Gastrocnemius medialis (tissue), 4 donors: ENCODE measurements at regions of chr11 and their contacts with region 1.

Region 1: DNA sequence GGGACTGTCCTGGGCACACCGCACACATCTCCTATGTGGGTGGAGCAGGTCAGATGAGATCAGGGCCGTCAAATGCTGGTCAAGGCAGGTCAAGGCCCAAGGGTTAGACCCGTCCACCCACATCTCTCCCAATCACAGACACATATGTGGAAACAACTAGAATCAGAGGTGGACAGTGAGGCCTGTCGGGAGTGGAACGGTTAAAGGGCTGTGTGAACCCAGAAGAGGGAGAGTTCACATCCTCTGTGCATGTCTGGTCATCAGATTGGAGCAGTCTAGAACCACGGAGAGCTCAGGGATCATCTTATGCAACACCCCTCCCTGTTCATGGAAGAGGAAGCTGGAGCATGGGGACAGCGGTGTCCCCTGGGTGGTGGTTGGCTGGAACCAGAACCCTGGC is 5.9 kb downstream of the ARL2 start:
- DNase-seq: no peak
- ATAC-seq: no peak
- H3K4me3 ChIP-seq: no peak overlapping the region
- H3K27ac ChIP-seq: no peak overlapping the region
- H3K4me1 ChIP-seq: peaks cover 7 to 11% of the 10 kb centered on the region in 2 donors
- H3K27me3 ChIP-seq: no peaks in the 10 kb centered on the region
- CTCF ChIP-seq: no peak
- POLR2A ChIP-seq: no peak

Region 2: GRCh38 chr11:65043881-65044501 is 24.2 kb after region 1 on chr11:
- in situ Hi-C with region 1: no loop called
- intact Hi-C with region 1: no loop called
- DNase-seq: peak; percentile 9 to 36
- ATAC-seq: no peak
- H3K4me3 ChIP-seq: no peak overlapping the region
- H3K27ac ChIP-seq: no peak overlapping the region
- H3K4me1 ChIP-seq: peaks cover 14 to 21% of the 10 kb centered on the region in 2 donors
- H3K27me3 ChIP-seq: no peaks in the 10 kb centered on the region
- CTCF ChIP-seq: no peak
- POLR2A ChIP-seq: no peak

Region 3: DNA sequence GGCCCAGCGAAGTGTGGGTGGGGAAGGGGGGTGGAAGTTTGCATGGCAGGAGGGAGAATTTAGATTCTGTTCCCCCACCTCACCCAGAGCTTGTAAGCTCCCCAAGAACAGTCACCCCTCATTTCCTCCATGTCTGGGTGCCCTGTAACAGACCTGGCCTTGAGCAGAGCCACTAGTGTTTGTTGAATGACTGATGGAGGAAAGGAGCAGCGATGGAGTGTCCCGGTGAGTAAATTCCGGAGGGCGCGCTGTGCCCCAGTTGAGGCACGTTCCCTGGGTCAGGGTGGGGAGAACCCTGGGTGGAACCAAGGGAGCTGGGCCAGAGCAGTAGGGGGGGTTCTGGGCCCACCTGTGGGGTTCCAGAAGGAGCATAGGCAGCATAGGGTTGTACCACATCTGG is 37.7 kb after region 1 on chr11:
- in situ Hi-C with region 1: no loop called
- intact Hi-C with region 1: loop called (anchors 2 kb)
- DNase-seq: no peak
- ATAC-seq: no peak
- H3K4me3 ChIP-seq: no peak overlapping the region
- H3K27ac ChIP-seq: no peak overlapping the region
- H3K4me1 ChIP-seq: no peaks in the 10 kb centered on the region
- H3K27me3 ChIP-seq: no peaks in the 10 kb centered on the region
- CTCF ChIP-seq: no peak
- POLR2A ChIP-seq: no peak